Prostate gland (tissue), 2 donors: ENCODE measurements at regions of chr2 and their contacts with region 1.

Region 1: GRCh38 chr2:148989882-148990493 is 48.5 kb upstream of the LYPD6B start:
- DNase-seq: peak; percentile 71
- H3K4me3 ChIP-seq: no peak overlapping the region
- H3K27ac ChIP-seq: no peak overlapping the region
- H3K4me1 ChIP-seq: no peaks in the 10 kb centered on the region
- H3K27me3 ChIP-seq: no peaks in the 10 kb centered on the region
- CTCF ChIP-seq: peak; percentile 32 to 81 (median 67)
- POLR2A ChIP-seq: no peak

Region 2: DNA sequence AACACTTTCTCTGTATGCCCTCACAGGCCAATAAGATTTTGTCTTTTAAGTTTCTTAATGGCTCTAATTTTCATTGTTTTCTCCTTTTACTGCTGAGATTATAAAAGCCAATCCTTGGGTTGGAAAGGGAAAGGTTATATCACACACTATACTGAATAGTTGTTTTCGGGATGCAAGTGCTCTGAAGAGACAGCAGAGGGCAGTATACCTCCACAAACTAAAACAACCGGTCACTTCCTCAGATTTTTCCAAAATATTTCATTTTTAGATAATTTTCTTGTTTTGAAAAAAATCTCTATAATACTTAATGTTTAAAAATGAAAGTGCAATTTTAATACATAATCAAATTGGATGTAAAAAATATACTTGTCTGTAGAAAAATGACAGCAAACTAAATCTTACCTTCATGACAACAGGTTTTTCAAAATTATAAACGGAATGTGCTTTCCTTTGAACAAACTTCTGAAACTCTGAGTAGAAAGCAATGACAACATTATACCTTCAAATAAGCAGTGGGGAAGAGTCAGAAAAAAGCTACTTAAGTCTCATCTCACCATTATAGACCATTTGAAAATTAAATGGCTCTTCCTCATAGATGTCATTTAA is 1052.1 kb before region 1 on chr2:
- intact Hi-C with region 1: loop called (anchors 5 kb)
- DNase-seq: no peak
- H3K4me3 ChIP-seq: no peak overlapping the region
- H3K27ac ChIP-seq: no peak overlapping the region
- H3K4me1 ChIP-seq: no peaks in the 10 kb centered on the region
- H3K27me3 ChIP-seq: no peaks in the 10 kb centered on the region
- CTCF ChIP-seq: peak; percentile 44 to 82 (median 78)
- POLR2A ChIP-seq: no peak

Region 3: GRCh38 chr2:147989809-147990403 is 1000.1 kb before region 1 on chr2:
- intact Hi-C with region 1: loop called (anchors 5 kb)
- DNase-seq: no peak
- H3K4me3 ChIP-seq: no peak overlapping the region
- H3K27ac ChIP-seq: no peak overlapping the region
- H3K4me1 ChIP-seq: no peaks in the 10 kb centered on the region
- H3K27me3 ChIP-seq: no peaks in the 10 kb centered on the region
- CTCF ChIP-seq: peak in 3 of 4 experiments; percentile 31 to 67 (median 61)
- POLR2A ChIP-seq: no peak

Region 4: DNA sequence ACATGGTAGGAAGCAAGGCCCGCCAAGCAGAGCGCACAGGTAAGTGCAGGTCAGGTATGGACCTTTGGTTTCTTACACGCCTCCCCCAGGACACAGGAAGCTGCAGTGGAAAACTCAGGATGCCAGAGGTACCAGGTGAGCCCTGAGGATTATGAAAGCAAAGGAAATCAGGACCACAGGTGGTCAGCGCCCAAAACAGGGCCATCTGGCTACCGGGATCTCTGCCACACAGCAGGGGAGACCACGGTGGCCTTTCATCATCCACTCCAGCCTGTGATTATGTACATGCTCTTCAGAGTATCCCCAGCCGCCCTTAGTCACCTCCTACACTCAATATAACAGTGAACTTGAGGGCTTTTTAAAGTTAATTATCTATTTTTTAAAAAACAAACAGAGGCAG is 471.0 kb before region 1 on chr2:
- intact Hi-C with region 1: loop called (anchors 10 kb)
- DNase-seq: no peak
- H3K4me3 ChIP-seq: no peak overlapping the region
- H3K27ac ChIP-seq: no peak overlapping the region
- H3K4me1 ChIP-seq: no peaks in the 10 kb centered on the region
- H3K27me3 ChIP-seq: no peaks in the 10 kb centered on the region
- CTCF ChIP-seq: no peak
- POLR2A ChIP-seq: no peak

Region 5: DNA sequence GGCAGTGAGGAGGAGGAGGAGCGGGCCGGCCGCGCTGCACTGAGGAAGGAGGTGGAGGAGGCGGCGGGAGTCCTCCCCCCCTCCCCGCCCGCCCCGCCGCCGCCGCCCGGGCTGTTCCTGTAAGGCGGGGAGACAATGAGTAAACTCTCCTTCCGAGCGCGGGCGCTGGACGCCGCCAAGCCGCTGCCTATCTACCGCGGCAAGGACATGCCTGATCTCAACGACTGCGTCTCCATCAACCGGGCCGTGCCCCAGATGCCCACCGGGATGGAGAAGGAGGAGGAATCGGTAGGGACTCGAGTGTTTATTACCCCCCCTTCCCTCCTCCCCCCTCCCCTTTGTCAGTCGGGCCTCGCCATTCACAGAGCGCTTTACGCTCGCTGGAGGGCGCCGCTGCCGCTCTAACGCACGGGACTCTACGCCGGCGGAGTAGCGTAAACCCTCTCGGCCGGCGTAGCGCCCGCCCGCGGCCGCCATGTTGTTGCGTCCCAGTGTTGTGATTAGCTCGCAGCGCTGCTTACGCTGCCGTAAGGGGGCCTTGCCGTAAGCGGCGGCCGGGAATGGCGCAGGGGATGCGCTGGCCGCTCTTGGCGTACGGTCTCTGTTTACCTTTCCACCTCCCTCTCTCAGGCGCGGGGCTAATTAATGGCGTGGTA is 345.0 kb before region 1 on chr2:
- intact Hi-C with region 1: loop called (anchors 10 kb)
- DNase-seq: peak; percentile 92
- H3K4me3 ChIP-seq: peak overlapping the region; percentile 68 to 92
- H3K27ac ChIP-seq: peak overlapping the region; percentile 99 to 100
- H3K4me1 ChIP-seq: peaks cover 4% of the 10 kb centered on the region
- H3K27me3 ChIP-seq: no peaks in the 10 kb centered on the region
- CTCF ChIP-seq: peak in 2 of 4 experiments; percentile 60 to 64
- POLR2A ChIP-seq: no peak

Region 6: GRCh38 chr2:149098701-149099100 is 108.7 kb after region 1 on chr2:
- intact Hi-C with region 1: no loop called
- DNase-seq: peak; percentile 25
- H3K4me3 ChIP-seq: no peak overlapping the region
- H3K27ac ChIP-seq: no peak overlapping the region
- H3K4me1 ChIP-seq: no peaks in the 10 kb centered on the region
- H3K27me3 ChIP-seq: no peaks in the 10 kb centered on the region
- CTCF ChIP-seq: no peak
- POLR2A ChIP-seq: no peak

Region 7: GRCh38 chr2:149290662-149291061 is 300.7 kb after region 1 on chr2:
- intact Hi-C with region 1: no loop called
- DNase-seq: no peak
- H3K4me3 ChIP-seq: no peak overlapping the region
- H3K27ac ChIP-seq: no peak overlapping the region
- H3K4me1 ChIP-seq: no peaks in the 10 kb centered on the region
- H3K27me3 ChIP-seq: no peaks in the 10 kb centered on the region
- CTCF ChIP-seq: no peak
- POLR2A ChIP-seq: no peak

Region 8: DNA sequence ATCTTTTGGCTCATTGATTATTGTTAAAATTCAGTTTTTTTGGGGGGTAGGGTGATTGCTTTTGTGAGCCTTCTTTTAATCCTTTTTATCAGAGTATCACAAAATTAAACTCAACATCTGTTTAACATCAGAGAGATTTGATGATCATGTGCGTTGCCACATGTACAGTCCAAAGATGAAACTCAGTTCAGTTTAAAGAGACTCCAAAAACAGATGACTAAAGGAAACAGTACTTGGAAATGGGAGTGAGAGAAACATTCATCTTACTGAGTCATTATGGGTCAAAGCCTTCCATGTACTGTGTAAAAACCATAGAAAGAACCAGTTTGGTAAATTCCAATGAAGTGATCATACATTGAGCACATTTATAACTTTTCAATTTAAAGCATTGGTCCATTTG is 393.4 kb after region 1 on chr2:
- intact Hi-C with region 1: no loop called
- DNase-seq: no peak
- H3K4me3 ChIP-seq: no peak overlapping the region
- H3K27ac ChIP-seq: no peak overlapping the region
- H3K4me1 ChIP-seq: no peaks in the 10 kb centered on the region
- H3K27me3 ChIP-seq: no peaks in the 10 kb centered on the region
- CTCF ChIP-seq: no peak
- POLR2A ChIP-seq: no peak